ENCODE measurements at regions of chr22 and their contacts with region 1.

Region 1: DNA sequence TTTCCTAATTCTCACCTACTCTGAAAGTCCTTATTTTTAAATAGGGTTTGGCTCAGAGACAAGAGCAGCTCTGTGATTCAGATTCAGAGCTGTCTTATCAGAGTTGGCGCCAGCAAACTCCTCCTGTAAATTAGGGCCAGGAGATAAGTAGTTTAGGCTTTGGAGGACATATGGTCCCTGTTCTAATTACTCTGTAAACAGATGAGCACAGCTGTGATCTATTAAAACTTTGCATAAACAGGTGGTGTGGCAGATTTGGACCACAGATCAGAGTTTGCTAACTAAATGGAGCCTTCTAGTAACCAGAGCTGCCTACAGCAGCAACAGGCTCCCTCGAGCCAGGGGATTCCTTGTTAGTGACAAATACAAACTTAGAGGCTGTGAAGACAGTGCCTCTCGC is 27.9 kb downstream of the YPEL1 start:
- DNase-seq: peak; percentile 74
- H3K4me3 ChIP-seq: no peak overlapping the region
- H3K27ac ChIP-seq: peak overlapping the region; percentile 58
- H3K4me1 ChIP-seq: peaks cover 21% of the 10 kb centered on the region
- CTCF ChIP-seq: no peak

Region 2: DNA sequence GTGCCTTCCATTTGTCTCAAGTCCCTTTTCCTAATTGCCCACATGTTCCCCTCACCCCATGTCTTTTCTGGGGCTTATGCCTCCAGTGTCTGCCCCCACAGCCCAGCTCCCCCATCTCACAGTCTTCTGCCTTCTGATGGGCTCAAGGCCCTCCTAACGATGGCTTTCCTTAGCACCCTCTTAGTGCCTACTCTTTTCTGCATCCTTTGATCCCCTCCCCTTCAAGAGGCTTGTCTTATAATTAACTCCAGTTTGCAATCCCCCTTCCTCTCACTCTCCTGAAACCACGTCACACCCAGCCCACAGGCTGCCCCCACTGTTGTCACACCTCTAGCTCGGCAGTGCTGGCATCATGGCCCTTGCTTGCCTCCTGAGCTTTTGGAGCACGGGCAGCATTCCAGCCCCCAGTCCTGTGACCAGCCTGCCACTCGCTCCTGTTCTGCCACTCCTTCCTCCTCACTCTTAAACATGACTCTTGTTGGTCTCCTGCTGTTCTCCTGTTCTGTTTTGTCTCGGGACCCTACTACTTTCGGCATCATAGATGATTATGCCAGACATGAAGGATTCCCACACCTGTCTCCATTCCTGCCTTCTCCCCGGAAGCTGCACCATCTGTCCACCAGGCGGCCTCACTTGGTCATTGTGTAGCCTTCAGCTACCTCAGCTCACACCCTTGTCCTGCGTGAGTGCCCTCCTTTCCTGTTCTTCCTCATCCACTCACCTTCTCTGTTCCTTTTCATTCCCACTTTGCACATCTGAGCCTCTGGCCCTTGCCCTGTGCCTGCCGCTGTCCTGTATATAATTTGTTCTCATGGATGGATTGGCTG is 114.1 kb before region 1 on chr22:
- CTCF ChIA-PET with region 1: no interaction called
- POLR2A ChIA-PET with region 1: no interaction called
- intact Hi-C with region 1: no loop called
- DNase-seq: no peak
- H3K4me3 ChIP-seq: no peak overlapping the region
- H3K27ac ChIP-seq: no peak overlapping the region
- H3K4me1 ChIP-seq: peaks cover 36% of the 10 kb centered on the region
- CTCF ChIP-seq: peak; percentile 36; the same call in 1 of the 2 replicates

Region 3: GRCh38 chr22:21666786-21667185 is 40.9 kb before region 1 on chr22:
- CTCF ChIA-PET with region 1: no interaction called
- POLR2A ChIA-PET with region 1: interaction called, 3 read pairs
- intact Hi-C with region 1: loop called (anchors 5 kb)
- DNase-seq: no peak
- H3K4me3 ChIP-seq: peak overlapping the region; percentile 93
- H3K27ac ChIP-seq: peak overlapping the region; percentile 63
- H3K4me1 ChIP-seq: peaks cover 54% of the 10 kb centered on the region
- CTCF ChIP-seq: no peak

Region 4: GRCh38 chr22:21719024-21719423 is 11.3 kb after region 1 on chr22:
- CTCF ChIA-PET with region 1: no interaction called
- POLR2A ChIA-PET with region 1: no interaction called
- intact Hi-C with region 1: no loop called
- DNase-seq: peak; percentile 38
- H3K4me3 ChIP-seq: no peak overlapping the region
- H3K27ac ChIP-seq: peak overlapping the region; percentile 18
- H3K4me1 ChIP-seq: peaks cover 32% of the 10 kb centered on the region
- CTCF ChIP-seq: no peak

Region 5: GRCh38 chr22:21766691-21767462 is 59.2 kb after region 1 on chr22:
- CTCF ChIA-PET with region 1: no interaction called
- POLR2A ChIA-PET with region 1: no interaction called
- intact Hi-C with region 1: no loop called
- DNase-seq: peak; percentile 30
- H3K4me3 ChIP-seq: no peak overlapping the region
- H3K27ac ChIP-seq: peak overlapping the region; percentile 35
- H3K4me1 ChIP-seq: peaks cover 26% of the 10 kb centered on the region
- CTCF ChIP-seq: no peak

Measured in OCI-LY7 (cell line).